ENCODE measurements at regions of chr1 and their contacts with region 1.

Region 1: GRCh38 chr1:18234790-18235242 is 127.2 kb downstream of the IGSF21 start:
- DNase-seq: peak; percentile 68
- H3K4me3 ChIP-seq: no peak overlapping the region
- H3K27ac ChIP-seq: no peak overlapping the region
- H3K4me1 ChIP-seq: peaks cover 6% of the 10 kb centered on the region
- CTCF ChIP-seq: peak; percentile 91

Region 2: DNA sequence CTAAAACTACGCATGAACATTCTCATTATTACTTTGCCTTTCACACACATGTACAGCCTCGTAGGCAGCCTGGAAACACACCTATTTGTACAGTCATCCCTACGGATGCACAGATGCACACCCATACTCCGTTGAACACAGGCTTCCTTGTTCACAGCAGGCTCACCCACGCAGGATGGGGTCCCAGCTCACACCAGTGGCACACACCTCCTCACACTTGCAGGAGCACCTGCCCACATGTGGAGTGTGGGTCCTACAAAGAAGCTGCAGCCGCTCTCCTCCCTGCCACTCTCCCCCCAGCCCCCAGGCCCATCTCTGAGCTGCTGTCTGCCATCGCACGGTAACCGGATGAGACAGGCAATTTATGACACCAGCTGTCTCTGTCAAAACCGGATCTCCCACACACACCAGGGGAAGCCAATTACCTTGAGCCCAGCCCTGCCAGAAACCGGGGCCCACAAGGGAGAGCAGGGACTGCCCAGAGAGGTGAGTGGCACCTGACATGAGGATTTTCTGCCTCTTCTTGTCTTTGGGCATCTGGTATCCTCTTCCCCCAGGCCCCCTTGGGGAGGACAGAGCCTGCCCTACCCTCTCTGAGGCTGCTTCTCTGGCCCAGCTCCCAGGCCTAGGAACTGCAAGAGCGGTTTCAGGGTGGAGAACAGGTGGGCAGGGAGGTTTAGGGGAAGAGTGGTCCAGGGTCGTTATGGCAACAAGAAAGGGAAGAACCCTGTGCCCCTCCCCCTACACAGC is 48.2 kb after region 1 on chr1:
- CTCF ChIA-PET with region 1: interaction called, 4 read pairs
- POLR2A ChIA-PET with region 1: interaction called, 6 read pairs
- intact Hi-C with region 1: loop called (anchors 5 kb)
- DNase-seq: peak; percentile 72
- H3K4me3 ChIP-seq: peak overlapping the region; percentile 66
- H3K27ac ChIP-seq: peak overlapping the region; percentile 95
- H3K4me1 ChIP-seq: peaks cover 95% of the 10 kb centered on the region
- CTCF ChIP-seq: no peak

Measured in OCI-LY7 (cell line).